ENCODE measurements at regions of chr4 and their contacts with region 1.

Region 1: DNA sequence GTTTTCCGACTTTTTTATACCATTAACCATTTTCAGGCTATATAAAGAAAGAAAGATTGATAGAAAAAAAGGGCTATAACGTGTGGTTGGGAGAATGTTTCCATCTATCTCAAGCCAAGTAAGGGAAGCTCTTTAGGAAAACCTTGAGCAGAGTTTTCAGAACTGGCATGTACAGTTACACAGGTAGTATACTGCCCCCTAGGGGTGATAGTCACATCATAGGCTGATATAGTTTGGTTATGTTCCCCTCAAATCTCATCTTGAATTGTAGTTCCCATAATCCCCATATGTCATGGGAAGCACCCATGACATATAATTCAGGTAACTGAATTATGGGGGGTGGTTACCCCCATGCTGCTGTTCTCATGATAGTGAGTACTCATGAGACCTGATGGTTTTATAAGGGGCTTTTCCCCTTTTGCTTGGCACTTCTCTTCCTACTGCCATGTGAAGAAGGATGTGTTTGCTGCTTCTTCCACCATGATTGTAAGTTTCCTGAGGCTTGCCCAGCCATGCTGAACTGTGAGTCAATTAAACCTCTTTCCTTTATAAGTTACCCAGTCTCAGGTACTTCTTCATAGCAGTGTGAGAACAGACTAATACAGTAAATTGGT is 186.8 kb downstream of the TMA16 start:
- DNase-seq: peak; percentile 30
- H3K4me3 Mint-ChIP-seq: no peak overlapping the region
- H3K27ac Mint-ChIP-seq: no peak overlapping the region
- H3K4me1 Mint-ChIP-seq: no peaks in the 10 kb centered on the region
- H3K27me3 Mint-ChIP-seq: no peaks in the 10 kb centered on the region

Region 2: GRCh38 chr4:163484906-163485305 is 196.4 kb before region 1 on chr4:
- CTCF ChIA-PET with region 1: no interaction called
- intact Hi-C with region 1: loop called (anchors 5 kb)
- DNase-seq: peak; percentile 67
- H3K4me3 Mint-ChIP-seq: no peak overlapping the region
- H3K27ac Mint-ChIP-seq: no peak overlapping the region
- H3K4me1 Mint-ChIP-seq: no peaks in the 10 kb centered on the region
- H3K27me3 Mint-ChIP-seq: peaks cover 13% of the 10 kb centered on the region

Region 3: DNA sequence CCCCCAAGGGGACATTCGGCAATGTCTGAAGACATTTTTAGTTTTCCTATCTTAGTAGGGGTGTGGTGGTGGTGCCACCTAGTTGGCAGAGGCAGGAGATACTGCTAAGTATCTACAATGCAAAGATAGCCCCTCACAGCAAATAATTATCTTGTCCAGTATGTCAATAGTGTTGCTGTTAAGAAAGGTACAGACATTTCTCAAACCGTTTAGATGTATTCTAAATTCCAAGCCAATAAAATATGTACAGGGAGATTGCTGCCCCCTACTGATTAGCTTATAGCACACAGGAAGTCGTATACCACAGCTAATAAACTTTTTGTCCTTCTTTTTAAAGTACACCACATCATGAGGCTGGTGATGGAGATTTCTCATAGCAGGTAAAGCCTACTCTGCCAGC is 73.7 kb after region 1 on chr4:
- CTCF ChIA-PET with region 1: interaction called, 4 read pairs
- intact Hi-C with region 1: loop called (anchors 1 kb)
- DNase-seq: no peak
- H3K4me3 Mint-ChIP-seq: no peak overlapping the region
- H3K27ac Mint-ChIP-seq: no peak overlapping the region
- H3K4me1 Mint-ChIP-seq: peaks cover 2% of the 10 kb centered on the region
- H3K27me3 Mint-ChIP-seq: no peaks in the 10 kb centered on the region

Region 4: DNA sequence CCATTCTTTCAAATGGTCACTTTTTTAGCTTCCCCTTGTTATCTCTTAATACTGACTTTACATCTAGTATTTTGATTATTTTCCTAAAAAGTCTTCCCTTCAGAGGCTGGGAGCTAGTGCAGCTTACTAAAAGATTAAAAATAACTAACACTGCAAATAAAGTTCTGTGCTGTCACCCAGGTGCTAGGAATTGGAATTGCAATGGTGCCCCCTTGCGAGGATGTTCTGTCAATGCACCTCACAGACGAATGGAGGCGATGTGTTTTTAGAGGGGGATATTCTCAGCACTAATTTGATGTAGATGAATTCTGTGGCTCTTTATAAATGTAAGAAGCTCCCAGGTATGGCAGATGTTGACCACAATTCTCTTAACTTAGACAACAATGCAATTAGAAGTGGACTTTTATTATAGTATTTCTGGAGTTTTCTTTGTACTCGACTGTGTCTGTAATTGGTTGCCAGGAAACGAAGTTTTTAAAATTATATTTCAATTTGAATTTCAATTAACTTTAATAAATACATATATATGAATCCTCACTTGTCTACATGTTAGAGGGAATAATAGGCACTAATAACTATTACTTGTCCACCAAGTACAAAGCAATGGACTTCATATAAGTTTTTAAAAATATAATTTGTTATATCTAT is 1050.6 kb after region 1 on chr4:
- CTCF ChIA-PET with region 1: no interaction called
- intact Hi-C with region 1: loop called (anchors 5 kb)
- DNase-seq: peak; percentile 72
- H3K4me3 Mint-ChIP-seq: no peak overlapping the region
- H3K27ac Mint-ChIP-seq: no peak overlapping the region
- H3K4me1 Mint-ChIP-seq: peaks cover 6% of the 10 kb centered on the region
- H3K27me3 Mint-ChIP-seq: peaks cover 9% of the 10 kb centered on the region